Activated naive CD4-positive, alpha-beta T cell treated with anti-CD3 and anti-CD28 coated beads, Interleukin-2, amount 10 ng/mL, durations not matched to agents 7 days and 5 days (primary cell): ENCODE measurements at regions of chr10 and their contacts with region 1.

Region 1: DNA sequence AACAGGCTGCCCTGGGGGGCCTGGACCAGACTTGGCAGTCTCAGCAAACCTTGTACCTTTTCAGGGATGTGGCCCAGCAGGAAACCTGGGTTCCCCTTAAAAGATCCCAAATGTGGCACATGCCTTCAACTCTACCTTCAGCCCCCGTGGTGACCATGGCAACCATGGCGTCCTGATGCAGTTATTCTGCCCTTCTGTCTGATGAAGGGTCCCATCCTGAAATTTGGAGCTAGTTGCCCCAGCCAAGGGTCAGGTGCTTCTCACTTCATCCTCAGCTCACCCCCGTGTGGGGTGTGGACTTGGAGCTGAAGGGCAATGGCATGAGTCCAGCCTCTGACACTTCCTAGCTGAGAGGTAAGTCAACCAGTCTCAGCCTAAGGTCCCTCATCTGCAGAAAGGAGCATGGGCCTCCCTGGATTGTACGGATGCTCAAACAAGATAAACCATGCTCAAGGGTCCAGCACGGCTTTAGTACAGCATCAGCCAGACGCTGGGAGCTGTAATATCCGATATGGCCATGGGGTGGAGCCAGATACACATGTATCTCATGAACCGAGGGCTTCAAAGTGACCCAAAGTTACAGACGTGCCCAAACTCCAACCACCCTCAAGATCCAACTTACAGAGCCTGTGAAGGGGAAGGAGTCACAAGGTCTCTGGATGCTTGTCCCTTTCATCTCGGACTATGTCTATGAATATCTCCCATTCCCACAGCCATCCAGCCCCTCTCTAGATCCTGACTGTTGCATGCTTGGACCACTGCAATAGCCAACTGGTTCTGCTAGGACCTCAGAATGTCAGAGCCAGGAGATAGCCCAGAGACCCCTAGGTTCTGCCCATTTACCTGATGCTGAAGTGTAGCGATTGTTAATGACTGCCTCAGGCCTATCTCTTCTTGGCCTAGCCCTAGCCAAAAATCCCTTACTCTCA is 142.5 kb downstream of the SH3PXD2A start:
- DNase-seq: peak; percentile 90
- H3K4me3 Mint-ChIP-seq: no peak overlapping the region
- H3K27ac Mint-ChIP-seq: no peak overlapping the region
- H3K4me1 Mint-ChIP-seq: no peaks in the 10 kb centered on the region
- H3K27me3 Mint-ChIP-seq: peaks cover 29% of the 10 kb centered on the region

Region 2: GRCh38 chr10:103533827-103534226 is 179.0 kb before region 1 on chr10:
- CTCF ChIA-PET with region 1: no interaction called
- DNase-seq: no peak
- H3K4me3 Mint-ChIP-seq: no peak overlapping the region
- H3K27ac Mint-ChIP-seq: no peak overlapping the region
- H3K4me1 Mint-ChIP-seq: no peaks in the 10 kb centered on the region
- H3K27me3 Mint-ChIP-seq: peaks cover 51% of the 10 kb centered on the region

Region 3: DNA sequence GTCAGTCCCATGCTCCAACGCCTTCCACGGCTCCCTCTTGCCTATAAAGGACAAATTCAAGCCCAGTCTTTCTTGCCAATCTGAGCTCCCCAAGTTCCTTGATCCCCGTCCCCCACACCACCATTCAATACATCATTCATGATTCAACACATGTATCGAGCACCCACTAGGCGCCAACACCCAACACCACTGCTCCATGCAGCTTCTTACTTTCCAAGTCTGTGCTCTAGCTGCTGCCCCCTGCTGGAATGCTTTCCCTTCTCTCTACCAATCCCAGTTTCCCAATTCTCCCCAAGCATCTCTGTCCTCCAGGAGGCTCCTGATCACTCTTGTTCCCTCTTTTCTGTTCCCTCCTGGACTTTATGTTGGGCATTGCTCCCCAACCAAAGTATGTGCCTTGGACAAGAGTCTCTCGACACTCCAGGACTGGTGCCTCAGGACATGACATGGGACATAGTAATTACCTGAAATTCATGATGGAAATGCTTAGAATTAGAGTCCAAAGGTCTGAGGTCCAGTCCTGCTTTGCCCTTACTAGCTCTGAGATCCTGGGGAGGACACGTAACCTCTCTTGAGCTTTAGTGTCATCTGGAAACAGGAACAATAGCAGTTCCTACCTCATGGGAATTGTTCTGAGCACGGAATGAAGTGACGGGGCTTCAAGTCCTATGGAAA is 46.6 kb before region 1 on chr10:
- CTCF ChIA-PET with region 1: no interaction called
- DNase-seq: peak; percentile 32
- H3K4me3 Mint-ChIP-seq: no peak overlapping the region
- H3K27ac Mint-ChIP-seq: no peak overlapping the region
- H3K4me1 Mint-ChIP-seq: peaks cover 14% of the 10 kb centered on the region
- H3K27me3 Mint-ChIP-seq: no peaks in the 10 kb centered on the region

Region 4: DNA sequence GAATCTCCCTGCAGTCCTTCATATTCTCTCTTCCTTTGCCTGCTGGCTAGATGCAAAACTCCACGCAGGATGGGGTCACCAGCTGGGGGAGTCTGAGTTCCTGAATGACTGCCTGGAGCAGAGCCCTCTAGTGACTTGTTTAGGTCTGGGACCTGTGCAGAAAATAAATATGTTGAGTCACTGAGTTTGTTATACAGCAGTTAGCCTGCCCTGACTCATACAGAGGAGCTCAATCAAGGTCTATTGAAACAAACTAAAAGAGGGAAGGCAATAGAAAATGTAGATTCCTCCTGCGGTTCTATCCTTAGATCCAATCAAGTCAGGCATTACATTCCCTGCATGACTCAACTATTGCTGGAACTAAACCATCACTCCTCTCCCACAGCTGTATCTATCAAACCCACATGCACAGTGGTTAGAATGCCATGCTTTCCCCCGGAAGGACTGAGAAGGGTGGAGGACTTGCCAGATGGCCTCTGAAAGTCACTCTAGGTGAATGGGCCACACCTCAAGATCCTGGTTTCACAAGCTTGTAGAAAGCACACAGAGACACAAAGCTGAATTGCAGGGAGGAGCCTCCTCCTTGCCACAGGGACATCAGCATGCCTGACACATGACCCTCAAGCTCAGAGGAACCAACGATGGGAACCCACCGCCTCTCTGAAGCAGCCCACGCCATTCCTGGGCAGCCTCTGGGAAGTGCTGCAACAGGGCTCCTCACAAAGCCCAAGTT is 68.7 kb after region 1 on chr10:
- CTCF ChIA-PET with region 1: interaction called, 20 read pairs
- DNase-seq: no peak
- H3K4me3 Mint-ChIP-seq: no peak overlapping the region
- H3K27ac Mint-ChIP-seq: peak overlapping the region; percentile 77
- H3K4me1 Mint-ChIP-seq: peaks cover 19% of the 10 kb centered on the region
- H3K27me3 Mint-ChIP-seq: peaks cover 79% of the 10 kb centered on the region

Region 5: GRCh38 chr10:103845972-103846371 is 133.1 kb after region 1 on chr10:
- CTCF ChIA-PET with region 1: interaction called, 26 read pairs
- DNase-seq: peak; percentile 68
- H3K4me3 Mint-ChIP-seq: no peak overlapping the region
- H3K27ac Mint-ChIP-seq: peak overlapping the region; percentile 84
- H3K4me1 Mint-ChIP-seq: peaks cover 28% of the 10 kb centered on the region
- H3K27me3 Mint-ChIP-seq: peaks cover 46% of the 10 kb centered on the region

Region 6: DNA sequence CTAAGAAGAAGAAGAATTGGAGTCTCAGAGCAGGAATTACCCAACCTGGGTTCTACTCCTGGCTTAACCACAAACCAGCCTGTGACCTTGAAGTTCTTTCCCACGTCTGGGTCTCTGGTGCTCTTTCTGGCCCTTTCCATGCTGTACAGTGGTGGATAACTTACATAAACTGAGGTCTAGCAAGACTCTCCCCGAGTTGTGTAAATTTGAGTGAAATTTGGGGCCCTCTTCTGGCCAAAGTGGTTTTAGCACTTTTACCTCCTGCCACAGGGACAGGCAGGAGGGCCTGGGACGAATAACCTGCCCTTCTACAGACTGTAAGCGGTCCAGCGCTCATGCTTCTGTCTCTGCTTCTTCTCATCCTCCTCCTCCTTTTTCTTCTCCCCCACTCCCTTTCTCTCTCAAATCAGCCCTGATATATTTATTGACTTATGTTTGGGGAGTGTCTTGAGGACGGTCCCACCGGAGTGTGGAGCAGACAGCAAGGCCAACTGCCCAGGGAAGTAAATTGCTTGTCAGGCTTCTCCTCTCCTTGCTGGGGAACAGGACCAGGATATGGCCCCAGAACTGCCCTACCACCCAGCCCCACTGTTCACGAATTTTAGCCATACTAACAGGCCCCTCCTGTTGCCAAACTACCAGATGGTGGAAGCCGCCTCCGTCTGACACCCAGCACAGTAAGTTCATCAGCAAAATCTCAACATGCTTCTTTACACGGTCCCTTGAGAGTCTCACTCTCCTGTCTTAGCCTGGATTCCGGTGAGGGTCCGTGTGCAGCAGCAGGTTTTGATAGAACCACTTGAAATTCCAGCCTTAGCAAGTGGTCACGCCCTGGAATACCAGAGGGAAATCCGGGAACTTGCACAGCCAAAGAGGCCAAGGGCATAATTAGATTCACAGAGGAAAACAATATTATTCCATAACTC is 146.6 kb after region 1 on chr10:
- CTCF ChIA-PET with region 1: interaction called, 74 read pairs
- DNase-seq: peak; percentile 73
- H3K4me3 Mint-ChIP-seq: no peak overlapping the region
- H3K27ac Mint-ChIP-seq: no peak overlapping the region
- H3K4me1 Mint-ChIP-seq: peaks cover 11% of the 10 kb centered on the region
- H3K27me3 Mint-ChIP-seq: peaks cover 59% of the 10 kb centered on the region

Region 7: DNA sequence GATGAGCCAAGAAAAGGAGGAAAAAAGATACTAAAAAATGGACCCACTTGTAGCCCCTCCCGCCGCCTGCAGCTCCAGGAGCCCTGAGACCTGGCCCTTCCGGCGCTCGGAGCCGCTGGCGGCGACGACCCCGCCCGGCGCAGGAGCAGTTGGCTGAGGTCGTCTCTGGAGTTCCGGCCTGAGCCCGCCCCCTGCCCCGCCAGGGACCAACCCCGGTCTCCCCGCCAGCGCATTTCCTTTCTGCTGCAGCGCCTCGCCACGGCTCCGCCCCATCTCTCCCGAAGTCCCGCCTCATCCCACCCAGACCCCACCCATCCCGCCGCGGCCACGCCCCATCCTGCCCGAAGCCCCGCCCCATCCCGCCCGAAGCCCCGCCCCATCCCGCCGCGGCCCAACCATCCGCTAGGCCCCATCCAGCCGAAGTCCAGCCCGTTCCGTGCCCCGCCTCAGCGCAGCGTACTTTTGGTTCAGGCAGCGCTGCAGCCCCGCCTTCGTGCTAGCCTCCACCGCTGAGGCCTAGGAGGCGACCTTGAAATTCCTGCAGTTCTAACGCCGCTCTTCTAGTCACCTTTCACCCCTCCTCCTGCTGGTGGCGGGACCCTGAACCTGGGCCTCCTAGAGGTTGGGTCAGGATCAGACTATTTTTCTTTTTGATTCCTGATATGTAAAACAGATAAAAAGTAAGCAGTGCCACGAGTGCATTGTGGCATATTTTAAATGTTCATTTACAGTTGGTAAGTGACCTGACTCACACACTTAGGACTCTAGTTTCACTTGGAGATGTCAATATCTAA is 205.4 kb after region 1 on chr10 and contains the start of gene STN1:
- CTCF ChIA-PET with region 1: no interaction called
- DNase-seq: peak; percentile 97
- H3K4me3 Mint-ChIP-seq: peak within 1 kb of the TSS; percentile 84
- H3K27ac Mint-ChIP-seq: peak within 1 kb of the TSS; percentile 90
- H3K4me1 Mint-ChIP-seq: peaks cover 43% of the 10 kb centered on the region
- H3K27me3 Mint-ChIP-seq: no peaks in the 10 kb centered on the region